ENCODE measurements at regions of chr10 and their contacts with region 1.

Region 1: DNA sequence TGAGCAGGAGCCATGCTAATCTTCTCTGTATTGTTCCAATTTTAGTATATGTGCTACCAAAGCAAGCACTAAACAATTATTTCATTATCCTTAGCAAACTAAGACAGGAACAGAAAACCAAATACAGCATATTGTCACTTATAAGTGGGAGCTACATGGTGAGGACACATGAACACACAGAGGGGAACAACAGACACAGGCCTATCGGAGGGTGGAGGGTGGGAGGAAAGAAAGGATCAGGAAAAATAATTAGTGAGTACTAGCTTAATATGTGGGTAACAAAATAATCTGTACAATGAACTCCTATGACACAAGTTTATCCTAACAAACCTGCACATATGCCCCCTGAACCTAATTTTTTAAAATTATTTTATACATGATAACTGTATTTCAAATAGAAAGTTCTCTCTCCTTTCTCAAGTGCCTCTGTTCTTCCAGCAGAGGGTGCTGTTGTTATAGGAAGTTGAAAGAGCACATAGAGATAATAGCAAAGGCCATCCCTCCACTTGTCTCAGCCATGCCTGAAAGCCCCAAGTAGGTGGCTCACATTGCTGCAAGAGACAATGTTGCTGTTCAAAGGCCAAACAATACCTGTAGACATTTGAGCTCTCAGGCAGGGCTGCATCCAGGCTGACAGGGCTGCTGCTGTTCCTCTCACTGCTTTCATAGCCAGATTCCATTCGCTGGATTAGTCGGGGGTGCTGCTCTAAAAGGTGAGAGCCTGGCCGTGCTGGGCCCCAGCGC is 33.4 kb upstream of the PPP3CB start:
- DNase-seq: no peak
- H3K4me3 ChIP-seq: no peak overlapping the region
- H3K27ac ChIP-seq: no peak overlapping the region
- H3K4me1 ChIP-seq: no peaks in the 10 kb centered on the region
- H3K27me3 ChIP-seq: no peaks in the 10 kb centered on the region
- CTCF ChIP-seq: peak; percentile 80 to 90 (median 85)
- EP300 ChIP-seq: no peak
- POLR2A ChIP-seq: no peak

Region 2: DNA sequence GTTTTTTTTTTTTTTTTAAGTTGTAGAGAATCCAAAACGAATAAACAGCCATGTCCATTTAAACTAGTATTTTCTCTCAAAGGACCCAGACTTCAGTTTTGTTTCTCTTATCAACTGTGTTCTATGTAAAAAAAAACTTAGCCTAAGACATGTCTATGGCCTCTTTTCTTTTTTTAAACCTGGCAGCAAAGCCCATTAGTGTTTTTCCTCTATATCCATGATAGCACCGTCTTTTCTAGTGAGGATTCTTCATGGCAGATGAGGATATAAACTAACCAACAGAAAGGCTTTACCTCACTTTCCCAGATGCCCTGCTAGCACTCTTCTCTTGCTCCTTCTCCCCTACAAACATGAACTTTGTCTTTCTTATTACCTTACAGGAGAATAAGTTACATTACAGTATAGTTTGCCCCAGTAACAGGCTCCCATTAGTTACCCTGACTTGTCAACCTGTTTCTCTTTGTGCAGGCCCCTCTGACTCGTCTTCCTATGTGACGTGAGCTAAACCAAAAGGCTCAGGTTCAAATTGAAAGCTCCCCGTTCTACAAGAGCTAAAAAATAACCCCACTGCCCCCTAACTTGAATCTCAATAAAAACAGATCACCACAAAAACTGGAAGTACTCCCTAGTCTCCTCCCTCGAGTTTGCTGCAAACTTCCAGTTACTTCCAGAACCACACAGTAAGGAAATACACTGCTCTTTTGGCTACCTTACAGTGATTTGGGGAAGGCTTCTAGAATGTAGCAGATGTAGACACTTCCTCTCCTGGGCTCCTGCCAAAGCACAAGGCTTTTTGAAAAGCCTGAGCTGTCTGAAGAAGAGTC is 452.7 kb before region 1 on chr10:
- intact Hi-C with region 1: no loop called
- DNase-seq: no peak
- H3K4me3 ChIP-seq: peak overlapping the region; percentile 24 to 39 (median 32)
- H3K27ac ChIP-seq: peak overlapping the region; percentile 69 to 89 (median 75)
- H3K4me1 ChIP-seq: peaks cover 11 to 26% (median 23%) of the 10 kb centered on the region in 4 donors
- H3K27me3 ChIP-seq: no peaks in the 10 kb centered on the region
- CTCF ChIP-seq: no peak
- EP300 ChIP-seq: no peak
- POLR2A ChIP-seq: no peak

Region 3: GRCh38 chr10:73625884-73626752 is 96.9 kb after region 1 on chr10:
- intact Hi-C with region 1: loop called (anchors 5 kb)
- DNase-seq: peak; percentile 95
- H3K4me3 ChIP-seq: peak overlapping the region; percentile 69 to 95 (median 82)
- H3K27ac ChIP-seq: peak overlapping the region; percentile 81 to 89 (median 82)
- H3K4me1 ChIP-seq: peaks cover 11 to 17% (median 16%) of the 10 kb centered on the region in 4 donors
- H3K27me3 ChIP-seq: no peaks in the 10 kb centered on the region
- CTCF ChIP-seq: peak in 1 of 3 experiments; percentile 12
- EP300 ChIP-seq: no peak
- POLR2A ChIP-seq: no peak

Region 4: DNA sequence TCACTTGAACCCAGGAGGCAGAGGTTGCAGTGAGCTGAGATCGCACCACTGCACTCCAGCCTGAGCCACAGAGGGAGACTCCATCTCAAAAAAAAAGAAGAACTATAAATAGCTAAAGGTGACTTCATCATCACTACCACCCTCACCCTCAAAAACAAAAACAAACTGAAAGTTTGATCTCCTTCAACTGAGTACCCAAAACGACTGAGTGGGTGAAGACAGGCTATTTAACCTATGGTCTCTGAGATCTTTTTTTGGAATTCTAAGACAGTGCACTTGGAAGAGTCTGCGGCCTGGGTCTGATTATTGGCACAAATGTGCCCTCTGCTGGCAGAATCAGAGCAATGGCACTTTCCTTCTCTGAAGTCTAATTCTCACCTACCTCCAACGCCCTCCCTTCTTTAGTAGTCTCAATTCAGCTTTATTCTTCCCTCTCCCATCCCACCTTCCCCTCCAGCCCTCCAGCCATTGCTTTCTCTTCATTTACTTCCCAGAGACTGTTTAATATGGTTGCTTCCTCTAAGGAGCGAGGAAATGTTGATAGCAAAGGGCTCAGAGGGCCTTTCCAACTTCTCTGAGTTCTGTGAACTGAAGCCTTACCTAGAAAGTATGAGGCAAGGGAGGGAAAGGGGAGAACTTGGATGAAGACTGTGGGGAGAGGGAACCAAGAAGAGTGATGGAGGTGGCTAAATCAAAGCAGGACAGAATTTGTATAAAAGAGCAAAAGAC is 114.9 kb after region 1 on chr10:
- intact Hi-C with region 1: loop called (anchors 2 kb)
- DNase-seq: no peak
- H3K4me3 ChIP-seq: no peak overlapping the region
- H3K27ac ChIP-seq: no peak overlapping the region
- H3K4me1 ChIP-seq: peaks cover 21 to 33% (median 27%) of the 10 kb centered on the region in 4 donors
- H3K27me3 ChIP-seq: no peaks in the 10 kb centered on the region
- CTCF ChIP-seq: peak; percentile 87 to 95 (median 90)
- EP300 ChIP-seq: no peak
- POLR2A ChIP-seq: no peak

Measured in esophagus muscularis mucosa (tissue), 4 donors.